Dorsolateral prefrontal cortex (tissue), 120 donors: ENCODE measurements at regions of chr9 and their contacts with region 1.

Region 1: DNA sequence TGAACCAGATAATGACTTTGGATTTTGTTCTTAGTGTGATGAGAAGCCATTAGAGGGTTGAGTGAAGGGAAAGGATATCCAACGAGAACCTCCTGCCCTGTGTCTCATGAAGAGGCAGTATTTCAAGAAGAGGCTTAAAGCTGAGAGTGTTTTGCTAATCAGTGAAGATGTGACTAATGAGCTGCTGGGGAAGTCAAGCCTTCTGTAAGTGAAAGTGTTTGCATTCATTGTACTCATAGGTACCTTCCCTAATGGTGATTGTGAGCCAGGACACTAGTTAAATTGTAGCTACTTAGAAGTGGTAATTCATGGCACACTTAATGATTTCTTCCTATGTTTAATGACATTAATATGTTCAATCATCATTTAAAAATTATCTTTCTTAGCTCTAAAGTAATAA is 23.7 kb downstream of the PIP5K1B start:
- DNase-seq: no peak
- H3K4me3 ChIP-seq: no peak overlapping the region
- H3K27ac ChIP-seq: no peak overlapping the region
- H3K27me3 ChIP-seq: no peaks in the 10 kb centered on the region
- CTCF ChIP-seq: no peak

Region 2: GRCh38 chr9:68643901-68644809 is 84.6 kb before region 1 on chr9:
- intact Hi-C with region 1: loop called in 1 of 2 experiments (anchors 5 kb)
- DNase-seq: no peak
- H3K4me3 ChIP-seq: no peak overlapping the region
- H3K27ac ChIP-seq: no peak overlapping the region
- H3K27me3 ChIP-seq: no peaks in the 10 kb centered on the region
- CTCF ChIP-seq: no peak

Region 3: GRCh38 chr9:68851657-68852056 is 122.9 kb after region 1 on chr9:
- intact Hi-C with region 1: loop called in 1 of 2 experiments (anchors 10 kb)
- DNase-seq: peak in 1 of 10 donors; percentile 8
- H3K4me3 ChIP-seq: no peak overlapping the region
- H3K27ac ChIP-seq: no peak overlapping the region
- H3K27me3 ChIP-seq: no peaks in the 10 kb centered on the region
- CTCF ChIP-seq: no peak